Adrenal gland (tissue), 19 donors: ENCODE measurements at regions of chr20 and their contacts with region 1.

Region 1: DNA sequence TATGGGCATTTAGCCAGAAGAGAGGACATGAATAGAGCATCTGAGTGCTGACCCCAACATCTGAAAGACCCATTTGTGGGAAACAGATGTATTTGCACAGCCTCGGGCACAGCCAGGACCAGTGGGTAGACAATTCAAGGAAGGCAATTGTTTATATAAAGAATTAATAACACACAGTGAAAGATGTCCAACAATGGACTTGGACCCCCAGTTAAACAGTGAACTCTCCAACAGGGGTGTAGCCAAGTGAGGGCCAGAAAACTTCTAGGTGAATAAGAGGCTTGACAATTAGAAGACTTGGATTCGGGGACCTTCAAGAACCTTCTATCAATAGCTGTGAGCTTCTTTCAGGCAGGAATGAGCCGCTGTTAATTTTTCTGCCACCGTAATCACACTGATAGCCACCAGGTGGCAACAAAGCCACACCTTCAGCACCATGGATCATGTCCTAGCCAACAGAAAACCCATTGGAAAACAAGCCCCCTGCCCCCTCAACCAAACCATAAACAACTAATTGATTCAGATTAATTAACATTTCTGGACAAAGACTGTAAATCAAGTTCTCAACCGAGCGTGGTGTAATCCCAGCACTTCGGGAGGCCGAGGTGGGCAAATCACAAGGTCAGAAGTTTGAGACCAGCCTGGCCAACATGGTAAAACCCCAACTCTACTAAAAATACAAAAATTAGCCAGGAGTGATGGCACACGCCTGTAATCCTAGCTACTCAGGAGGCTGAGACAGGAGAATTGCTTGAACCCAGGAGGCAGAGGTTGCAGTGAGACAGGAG is 8.8 kb upstream of the SRSF6 start:
- DNase-seq: peak in 6 of 7 donors; percentile 37 to 66 (median 48)
- H3K4me3 ChIP-seq: no peak overlapping the region
- H3K27ac ChIP-seq: no peak overlapping the region
- H3K4me1 ChIP-seq: no peaks in the 10 kb centered on the region
- H3K27me3 ChIP-seq: no peaks in the 10 kb centered on the region
- CTCF ChIP-seq: peak; percentile 53 to 73 (median 66)
- POLR2A ChIP-seq: no peak

Region 2: DNA sequence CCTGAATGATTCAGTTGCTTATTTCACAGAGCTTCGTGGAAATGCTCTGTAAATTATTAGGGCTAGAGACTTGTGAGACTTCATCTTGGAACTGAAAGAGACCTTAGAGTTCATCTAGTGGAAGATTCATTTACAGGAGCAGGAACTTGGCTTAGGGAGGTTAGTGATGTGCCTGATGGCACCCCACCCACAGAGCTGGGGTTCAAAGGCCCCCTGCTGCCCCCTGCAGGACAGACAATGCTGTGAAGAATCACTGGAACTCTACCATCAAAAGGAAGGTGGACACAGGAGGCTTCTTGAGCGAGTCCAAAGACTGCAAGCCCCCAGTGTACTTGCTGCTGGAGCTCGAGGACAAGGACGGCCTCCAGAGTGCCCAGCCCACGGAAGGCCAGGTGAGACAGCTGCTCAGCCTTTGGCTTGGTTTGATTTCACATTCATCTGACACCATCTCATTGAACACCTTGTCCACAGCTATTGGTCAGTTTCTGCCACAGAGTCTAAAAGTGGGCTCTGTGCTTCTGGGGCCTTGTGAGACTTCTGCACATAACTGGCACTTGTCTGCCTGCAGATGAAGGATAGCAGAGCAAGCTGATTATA is 243.1 kb after region 1 on chr20:
- intact Hi-C with region 1: loop called in 1 of 2 experiments (anchors 5 kb)
- DNase-seq: peak; percentile 35 to 70 (median 54)
- H3K4me3 ChIP-seq: no peak overlapping the region
- H3K27ac ChIP-seq: no peak overlapping the region
- H3K4me1 ChIP-seq: no peaks in the 10 kb centered on the region
- H3K27me3 ChIP-seq: no peaks in the 10 kb centered on the region
- CTCF ChIP-seq: peak; percentile 30 to 52 (median 42)
- POLR2A ChIP-seq: no peak

Region 3: GRCh38 chr20:44080646-44081267 is 631.8 kb after region 1 on chr20:
- intact Hi-C with region 1: loop called in 1 of 2 experiments (anchors 10 kb)
- DNase-seq: peak; percentile 66 to 94 (median 79)
- H3K4me3 ChIP-seq: no peak overlapping the region
- H3K27ac ChIP-seq: no peak overlapping the region
- H3K4me1 ChIP-seq: no peaks in the 10 kb centered on the region
- H3K27me3 ChIP-seq: no peaks in the 10 kb centered on the region
- CTCF ChIP-seq: peak; percentile 98 to 99 (median 99)
- POLR2A ChIP-seq: no peak